ENCODE measurements at regions of chr5 and their contacts with region 1.

Region 1: GRCh38 chr5:173472141-173472543 is 143.9 kb upstream of the STC2 start:
- DNase-seq: peak; percentile 95
- H3K4me3 ChIP-seq: no peak overlapping the region
- H3K27me3 ChIP-seq: no peaks in the 10 kb centered on the region
- CTCF ChIP-seq: no peak

Region 2: GRCh38 chr5:172979778-172980177 is 492.4 kb before region 1 on chr5:
- CTCF ChIA-PET with region 1: no interaction called
- POLR2A ChIA-PET with region 1: no interaction called
- DNase-seq: no peak
- H3K4me3 ChIP-seq: no peak overlapping the region
- H3K27me3 ChIP-seq: no peaks in the 10 kb centered on the region
- CTCF ChIP-seq: no peak

Region 3: GRCh38 chr5:173451031-173451430 is 21.1 kb before region 1 on chr5:
- CTCF ChIA-PET with region 1: interaction called, 11 read pairs
- POLR2A ChIA-PET with region 1: interaction called, 9 read pairs
- DNase-seq: no peak
- H3K4me3 ChIP-seq: no peak overlapping the region
- H3K27me3 ChIP-seq: no peaks in the 10 kb centered on the region
- CTCF ChIP-seq: peak; percentile 37

Region 4: GRCh38 chr5:173458821-173459609 is 13.1 kb before region 1 on chr5:
- CTCF ChIA-PET with region 1: interaction called, 16 read pairs
- POLR2A ChIA-PET with region 1: interaction called, 9 read pairs
- DNase-seq: no peak
- H3K4me3 ChIP-seq: no peak overlapping the region
- H3K27me3 ChIP-seq: no peaks in the 10 kb centered on the region
- CTCF ChIP-seq: no peak